A673 (cell line): ENCODE measurements at regions of chr7 and their contacts with region 1.

Region 1: GRCh38 chr7:39880556-39880955 is 69.5 kb upstream of the CDK13 start:
- DNase-seq: no peak
- H3K4me3 ChIP-seq: no peak overlapping the region
- H3K27ac ChIP-seq: no peak overlapping the region
- H3K4me1 ChIP-seq: no peaks in the 10 kb centered on the region
- H3K27me3 ChIP-seq: no peaks in the 10 kb centered on the region
- CTCF ChIP-seq: no peak

Region 2: DNA sequence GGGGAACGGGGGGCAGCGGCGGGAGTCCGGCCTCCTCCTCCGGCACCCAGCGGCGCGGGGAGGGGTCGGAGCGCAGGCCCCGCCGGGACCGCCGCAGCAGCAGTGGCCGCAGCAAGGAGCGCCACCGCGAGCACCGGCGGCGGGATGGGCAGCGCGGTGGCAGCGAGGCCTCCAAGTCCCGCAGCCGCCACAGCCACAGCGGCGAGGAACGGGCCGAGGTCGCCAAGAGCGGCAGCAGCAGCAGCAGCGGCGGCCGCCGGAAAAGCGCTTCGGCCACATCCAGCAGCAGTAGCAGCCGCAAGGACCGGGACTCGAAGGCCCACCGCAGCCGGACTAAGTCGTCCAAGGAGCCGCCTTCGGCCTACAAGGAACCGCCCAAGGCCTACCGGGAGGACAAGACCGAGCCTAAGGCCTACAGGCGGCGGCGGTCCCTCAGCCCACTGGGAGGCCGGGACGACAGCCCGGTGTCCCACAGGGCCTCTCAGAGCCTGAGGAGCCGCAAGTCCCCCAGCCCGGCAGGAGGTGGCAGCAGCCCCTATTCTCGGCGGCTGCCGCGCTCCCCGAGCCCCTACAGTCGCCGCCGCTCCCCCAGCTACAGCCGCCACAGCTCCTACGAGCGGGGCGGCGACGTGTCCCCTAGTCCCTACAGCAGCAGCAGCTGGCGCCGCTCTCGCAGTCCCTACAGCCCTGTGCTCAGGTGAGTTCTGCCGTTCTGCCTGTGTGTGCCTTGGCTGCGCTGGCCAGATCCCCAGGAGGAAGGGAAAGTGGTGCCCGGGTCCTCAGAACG is 70.8 kb after region 1 on chr7:
- CTCF ChIA-PET with region 1: no interaction called
- POLR2A ChIA-PET with region 1: no interaction called
- intact Hi-C with region 1: no loop called
- DNase-seq: peak; percentile 89
- H3K4me3 ChIP-seq: peak overlapping the region; percentile 96
- H3K27ac ChIP-seq: peak overlapping the region; percentile 98
- H3K4me1 ChIP-seq: peaks cover 9% of the 10 kb centered on the region
- H3K27me3 ChIP-seq: no peaks in the 10 kb centered on the region
- CTCF ChIP-seq: peak; percentile 61

Region 3: GRCh38 chr7:40560672-40561071 is 680.1 kb after region 1 on chr7:
- CTCF ChIA-PET with region 1: no interaction called
- POLR2A ChIA-PET with region 1: interaction called, 20 read pairs
- intact Hi-C with region 1: no loop called
- DNase-seq: no peak
- H3K4me3 ChIP-seq: no peak overlapping the region
- H3K27ac ChIP-seq: no peak overlapping the region
- H3K4me1 ChIP-seq: no peaks in the 10 kb centered on the region
- H3K27me3 ChIP-seq: no peaks in the 10 kb centered on the region
- CTCF ChIP-seq: no peak